Sciatic nerve (tissue), 2 donors: ENCODE measurements at regions of chrX and their contacts with region 1.

Region 1: GRCh38 chrX:47030339-47030738 is 47.9 kb upstream of the RGN start:
- DNase-seq: no peak
- ATAC-seq: no peak

Region 2: DNA sequence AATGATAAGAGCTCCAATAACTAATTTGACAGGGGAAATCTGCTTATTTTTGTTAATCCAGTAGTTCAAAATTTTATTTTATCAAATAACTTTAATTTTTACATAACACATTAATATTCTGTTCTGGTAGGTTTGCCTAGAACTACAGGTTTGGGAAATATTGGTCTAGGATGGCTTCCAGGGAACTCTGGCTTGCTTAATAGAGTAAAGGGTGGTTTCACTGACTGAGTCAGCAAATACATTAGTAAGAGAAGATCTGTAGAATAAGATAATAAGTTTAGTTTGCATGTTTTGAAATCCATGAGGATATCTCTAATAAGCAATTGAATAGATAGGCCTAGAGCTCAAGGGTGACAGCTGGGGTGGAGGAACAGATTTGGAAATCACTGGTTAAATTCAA is 985.9 kb before region 1 on chrX:
- intact Hi-C with region 1: no loop called
- DNase-seq: no peak
- ATAC-seq: no peak

Region 3: DNA sequence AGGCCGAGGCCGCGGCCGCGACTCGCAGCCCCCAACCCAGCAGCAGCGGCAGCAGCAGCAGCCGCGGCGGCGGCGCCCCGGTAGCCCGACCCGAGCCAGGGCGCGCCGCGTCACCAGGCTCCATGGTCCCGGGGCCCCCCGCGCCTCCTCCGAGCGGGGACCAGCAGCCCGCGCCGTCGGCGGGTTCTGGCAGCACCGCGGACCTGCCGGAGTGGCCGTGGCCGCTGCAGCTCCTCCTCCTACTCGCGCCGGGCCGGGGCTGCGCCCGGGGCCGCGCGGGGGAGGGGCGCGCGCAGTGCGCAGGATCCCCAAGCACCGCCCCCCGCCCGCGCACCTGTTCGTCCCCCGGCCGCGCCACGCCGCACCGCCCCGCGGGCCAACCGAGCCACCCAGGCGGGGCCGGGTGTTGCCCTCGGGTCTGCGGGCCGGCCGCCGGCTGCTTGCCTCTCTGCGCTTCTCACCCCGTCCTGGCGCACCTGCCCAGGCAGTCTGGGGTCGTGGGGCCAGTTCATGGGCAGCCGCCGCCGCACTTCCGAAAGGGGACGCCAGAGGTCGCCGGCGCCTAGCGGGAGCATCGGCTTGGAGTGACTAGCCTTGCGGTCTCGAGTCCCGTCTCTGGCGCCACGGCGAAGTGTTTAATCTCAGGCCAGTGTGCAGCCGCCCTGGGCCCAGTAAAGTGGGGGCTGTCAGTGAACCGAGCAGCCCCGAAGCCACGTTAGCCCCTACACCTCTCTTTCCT is 271.3 kb before region 1 on chrX and contains the start of gene SLC9A7:
- intact Hi-C with region 1: loop called (anchors 10 kb)
- DNase-seq: peak; percentile 86
- ATAC-seq: peak; percentile 86
- total RNA-seq, gene SLC9A7: 6.5 TPM